ENCODE measurements at regions of chr10 and their contacts with region 1.

Region 1: DNA sequence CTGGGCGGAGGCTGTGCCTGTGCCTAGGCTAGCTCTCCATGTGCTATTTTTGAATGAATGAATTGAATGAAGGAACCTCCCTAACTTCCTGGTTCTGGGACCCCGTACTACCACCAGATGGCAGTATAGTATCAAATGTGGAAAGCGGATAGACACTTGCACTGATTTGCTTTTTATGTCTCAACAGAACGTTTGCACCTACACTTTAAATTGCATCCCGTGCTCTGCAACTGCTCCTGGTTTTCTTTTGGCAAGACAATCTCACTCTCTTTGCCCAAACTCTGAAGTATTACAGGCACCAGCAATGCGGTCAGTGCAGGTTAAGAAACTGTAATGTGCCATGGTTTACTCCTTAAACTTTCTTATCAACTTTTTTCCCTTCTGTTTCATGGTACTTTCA is 6.5 kb downstream of the FZD8 start:
- DNase-seq: peak; percentile 48
- ATAC-seq: peak; percentile 78
- H3K4me3 Mint-ChIP-seq: no peak overlapping the region
- H3K27ac Mint-ChIP-seq: no peak overlapping the region
- H3K4me1 Mint-ChIP-seq: peaks cover 8% of the 10 kb centered on the region
- H3K27me3 Mint-ChIP-seq: peaks cover 36% of the 10 kb centered on the region
- CTCF ChIP-seq: peak; percentile 87

Region 2: GRCh38 chr10:35613597-35614226 is 21.9 kb before region 1 on chr10:
- CTCF ChIA-PET with region 1: interaction called, 13 read pairs
- POLR2A ChIA-PET with region 1: no interaction called
- intact Hi-C with region 1: no loop called
- DNase-seq: no peak
- ATAC-seq: no peak
- H3K4me3 Mint-ChIP-seq: no peak overlapping the region
- H3K27ac Mint-ChIP-seq: no peak overlapping the region
- H3K4me1 Mint-ChIP-seq: no peaks in the 10 kb centered on the region
- H3K27me3 Mint-ChIP-seq: peaks cover 21% of the 10 kb centered on the region
- CTCF ChIP-seq: no peak

Region 3: DNA sequence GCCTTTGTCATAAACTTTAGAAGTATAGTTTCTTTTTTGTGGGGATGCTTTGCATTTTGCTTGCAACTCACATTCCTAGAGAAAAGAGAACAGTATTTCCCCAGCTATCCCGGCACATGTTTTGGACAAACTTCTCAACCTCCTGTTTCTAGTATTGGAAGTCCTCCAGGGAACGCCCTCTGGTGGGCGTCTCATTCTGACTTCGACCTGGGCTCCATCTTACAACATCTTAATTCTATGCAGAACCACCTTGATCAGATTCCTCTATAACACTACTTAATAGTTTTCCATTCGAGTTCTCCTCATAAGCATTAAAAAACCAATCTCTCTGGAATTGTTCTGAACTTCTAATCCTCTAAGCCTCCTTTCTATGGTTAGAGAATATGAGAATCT is 146.1 kb after region 1 on chr10:
- CTCF ChIA-PET with region 1: interaction called, 3 read pairs
- POLR2A ChIA-PET with region 1: no interaction called
- intact Hi-C with region 1: loop called (anchors 5 kb)
- DNase-seq: peak; percentile 10
- ATAC-seq: no peak
- H3K4me3 Mint-ChIP-seq: no peak overlapping the region
- H3K27ac Mint-ChIP-seq: no peak overlapping the region
- H3K4me1 Mint-ChIP-seq: no peaks in the 10 kb centered on the region
- H3K27me3 Mint-ChIP-seq: peaks cover 1% of the 10 kb centered on the region
- CTCF ChIP-seq: no peak

Region 4: DNA sequence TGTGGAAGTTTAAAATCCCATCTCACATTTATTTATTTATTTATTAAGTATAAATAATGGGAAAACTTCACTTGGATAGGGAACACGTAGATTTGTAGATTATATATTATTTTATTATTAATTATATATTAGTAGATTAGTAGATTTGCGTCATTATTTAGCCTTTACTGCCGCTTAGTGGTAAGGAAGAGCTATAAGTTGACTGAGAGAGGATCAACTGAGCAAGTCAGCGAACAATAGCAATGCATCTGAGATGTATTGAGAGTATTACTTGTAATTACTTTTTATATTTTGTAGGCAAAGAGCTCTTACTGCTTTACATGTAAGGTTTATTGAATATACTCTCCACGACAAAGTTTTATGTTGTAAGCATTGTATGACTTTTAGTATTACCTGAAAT is 1245.3 kb after region 1 on chr10:
- CTCF ChIA-PET with region 1: interaction called, 12 read pairs
- POLR2A ChIA-PET with region 1: no interaction called
- intact Hi-C with region 1: loop called (anchors 10 kb)
- DNase-seq: no peak
- ATAC-seq: no peak
- H3K4me3 Mint-ChIP-seq: no peak overlapping the region
- H3K27ac Mint-ChIP-seq: no peak overlapping the region
- H3K4me1 Mint-ChIP-seq: no peaks in the 10 kb centered on the region
- H3K27me3 Mint-ChIP-seq: no peaks in the 10 kb centered on the region
- CTCF ChIP-seq: peak; percentile 19

Region 5: DNA sequence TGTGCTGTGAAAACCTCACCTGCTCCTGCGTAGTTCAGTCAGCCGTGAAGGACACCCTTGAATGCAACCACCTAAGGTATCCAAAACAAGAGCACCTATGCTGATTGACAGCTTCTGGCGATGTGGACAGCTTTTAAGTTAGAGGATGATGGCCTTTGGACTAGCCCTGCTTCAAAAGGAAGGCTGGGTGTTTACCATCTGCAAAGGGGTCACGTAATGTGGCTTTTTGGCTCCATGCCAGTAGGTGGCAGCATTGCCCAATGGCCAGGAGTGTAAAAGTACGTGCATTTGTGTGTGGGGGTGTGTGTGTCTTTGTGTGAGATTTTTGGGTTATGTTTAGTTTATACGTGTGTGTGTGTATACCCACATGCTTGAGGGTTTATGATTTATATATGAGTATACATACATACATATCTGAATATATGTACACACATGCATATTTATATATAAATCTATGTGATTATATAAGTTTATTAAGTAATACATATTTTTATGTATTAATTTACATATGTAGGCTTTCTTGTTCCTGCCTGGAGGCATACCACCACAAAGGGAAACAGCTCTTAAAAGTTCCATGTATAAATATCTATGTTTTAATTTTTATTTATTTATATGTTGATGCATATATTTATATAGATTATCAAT is 1253.5 kb after region 1 on chr10:
- CTCF ChIA-PET with region 1: no interaction called
- POLR2A ChIA-PET with region 1: no interaction called
- intact Hi-C with region 1: loop called (anchors 10 kb)
- DNase-seq: peak; percentile 71
- ATAC-seq: peak; percentile 51
- H3K4me3 Mint-ChIP-seq: no peak overlapping the region
- H3K27ac Mint-ChIP-seq: no peak overlapping the region
- H3K4me1 Mint-ChIP-seq: no peaks in the 10 kb centered on the region
- H3K27me3 Mint-ChIP-seq: no peaks in the 10 kb centered on the region
- CTCF ChIP-seq: peak; percentile 70